ENCODE measurements at regions of chr6 and their contacts with region 1.

Region 1: DNA sequence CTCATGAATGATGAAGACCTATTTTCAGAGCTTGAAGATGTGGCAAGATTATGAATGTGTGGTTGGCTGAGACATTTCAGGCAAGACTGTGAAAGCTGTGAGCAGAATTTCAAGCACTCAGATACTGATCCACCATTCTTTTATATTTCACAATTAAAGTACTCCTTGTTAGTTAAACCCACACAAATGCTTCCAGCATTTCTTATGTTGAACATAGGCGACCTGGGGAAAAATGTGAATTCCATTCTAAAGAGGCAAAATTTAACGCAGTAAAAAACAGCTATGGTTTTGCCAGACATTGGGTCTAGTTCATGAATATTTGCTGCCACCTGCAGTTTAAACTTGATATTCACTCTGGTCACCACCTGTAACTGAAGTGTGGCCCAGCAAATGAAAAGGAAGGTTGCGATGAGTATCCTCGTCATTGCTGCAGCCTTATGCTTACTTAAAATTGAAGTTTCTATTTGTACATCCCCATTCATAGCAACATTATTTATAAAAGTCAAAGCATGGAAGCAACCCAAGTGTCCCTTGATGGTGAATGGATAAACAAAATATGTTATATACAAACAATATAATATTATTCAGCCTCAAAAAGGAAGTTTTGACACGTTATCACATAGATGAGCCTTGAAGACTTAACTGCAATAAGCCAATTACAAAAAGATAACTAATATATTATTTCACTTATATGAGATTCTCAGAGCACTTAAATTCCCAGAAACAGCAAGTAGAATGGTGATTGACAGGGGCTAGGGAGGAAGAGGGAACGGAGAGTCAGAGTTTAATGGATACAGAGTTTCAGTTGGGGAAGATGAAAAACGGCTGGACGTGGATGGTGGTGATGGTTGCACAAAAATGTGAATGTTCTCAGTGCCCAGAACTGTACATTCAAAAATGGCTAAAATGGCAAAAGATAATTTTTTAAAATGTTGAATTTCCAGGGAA is 32.4 kb upstream of the FAM184A start:
- DNase-seq: peak; percentile 17
- ATAC-seq: peak; percentile 78
- H3K4me3 Mint-ChIP-seq: no peak overlapping the region
- H3K27ac Mint-ChIP-seq: no peak overlapping the region
- H3K4me1 Mint-ChIP-seq: peaks cover 22% of the 10 kb centered on the region
- H3K27me3 Mint-ChIP-seq: no peaks in the 10 kb centered on the region
- CTCF ChIP-seq: no peak

Region 2: GRCh38 chr6:118776607-118777549 is 334.0 kb before region 1 on chr6:
- CTCF ChIA-PET with region 1: no interaction called
- POLR2A ChIA-PET with region 1: no interaction called
- DNase-seq: peak; percentile 48
- ATAC-seq: peak; percentile 74
- H3K4me3 Mint-ChIP-seq: no peak overlapping the region
- H3K27ac Mint-ChIP-seq: no peak overlapping the region
- H3K4me1 Mint-ChIP-seq: peaks cover 11% of the 10 kb centered on the region
- H3K27me3 Mint-ChIP-seq: no peaks in the 10 kb centered on the region
- CTCF ChIP-seq: peak; percentile 35; the same call in 1 of the 2 replicates

Region 3: DNA sequence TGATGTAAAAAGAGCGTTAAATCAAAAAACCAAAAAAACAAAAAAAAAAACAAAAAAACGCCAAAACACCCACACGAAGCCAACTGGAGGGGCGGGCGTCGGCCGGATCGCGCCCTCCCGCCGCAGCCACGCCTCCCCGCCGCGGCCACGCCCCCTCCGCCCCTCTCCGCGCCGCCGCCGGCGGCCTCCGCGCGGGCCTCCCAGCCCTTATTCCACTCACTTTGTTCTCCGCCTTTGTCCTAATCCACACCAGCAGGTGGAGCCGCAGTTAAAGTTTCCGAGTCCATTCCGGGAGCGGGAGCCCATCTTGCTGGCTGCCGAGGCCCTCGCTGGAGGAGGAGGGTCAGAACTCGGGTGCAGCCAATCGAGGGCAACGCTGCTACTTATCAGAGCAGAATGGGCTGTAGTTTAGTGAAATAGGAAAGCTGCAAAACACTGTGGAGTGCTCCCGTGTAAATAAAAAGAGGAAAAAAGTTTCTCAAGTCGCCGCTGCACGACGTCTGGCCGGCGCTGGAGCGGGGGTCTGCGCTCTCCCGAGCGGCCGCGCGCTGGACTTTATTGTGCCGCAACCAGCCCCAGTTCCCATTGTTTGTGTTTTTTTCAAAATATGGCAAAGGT is 217.0 kb before region 1 on chr6 and contains the start of gene ASF1A:
- CTCF ChIA-PET with region 1: interaction called, 13 read pairs
- POLR2A ChIA-PET with region 1: no interaction called
- DNase-seq: peak; percentile 94
- ATAC-seq: peak; percentile 84
- H3K4me3 Mint-ChIP-seq: peak within 1 kb of the TSS; percentile 88
- H3K27ac Mint-ChIP-seq: peak within 1 kb of the TSS; percentile 98
- H3K4me1 Mint-ChIP-seq: peaks cover 42% of the 10 kb centered on the region
- H3K27me3 Mint-ChIP-seq: no peaks in the 10 kb centered on the region
- CTCF ChIP-seq: no peak; the same call in 1 of the 2 replicates
- total RNA-seq, gene ASF1A: 30.9 to 36.7 TPM (median 32.0 TPM) in 3 replicates

Region 4: DNA sequence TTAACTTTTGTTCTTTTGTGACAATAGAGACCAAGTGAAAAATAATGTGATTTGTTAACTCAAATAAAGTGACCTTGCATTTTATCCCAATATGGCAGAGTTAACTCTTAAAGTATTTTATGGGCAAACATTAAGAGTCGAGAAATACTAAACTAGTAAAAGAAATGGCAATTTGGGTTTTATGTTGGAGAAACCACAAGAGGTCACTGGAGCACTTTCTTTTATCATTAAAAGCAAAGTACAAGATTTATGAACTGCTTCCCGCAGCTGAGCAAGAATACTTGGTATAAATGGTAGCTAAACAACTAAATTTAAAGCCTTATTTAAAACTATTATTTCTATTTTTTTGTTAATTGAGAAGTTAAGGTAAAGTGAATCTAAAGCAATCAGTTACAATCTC is 142.5 kb before region 1 on chr6:
- CTCF ChIA-PET with region 1: interaction called, 67 read pairs
- POLR2A ChIA-PET with region 1: no interaction called
- DNase-seq: no peak
- ATAC-seq: peak; percentile 32; the same call in 1 of the 2 replicates
- H3K4me3 Mint-ChIP-seq: no peak overlapping the region
- H3K27ac Mint-ChIP-seq: no peak overlapping the region
- H3K4me1 Mint-ChIP-seq: peaks cover 21% of the 10 kb centered on the region
- H3K27me3 Mint-ChIP-seq: no peaks in the 10 kb centered on the region
- CTCF ChIP-seq: no peak

Region 5: DNA sequence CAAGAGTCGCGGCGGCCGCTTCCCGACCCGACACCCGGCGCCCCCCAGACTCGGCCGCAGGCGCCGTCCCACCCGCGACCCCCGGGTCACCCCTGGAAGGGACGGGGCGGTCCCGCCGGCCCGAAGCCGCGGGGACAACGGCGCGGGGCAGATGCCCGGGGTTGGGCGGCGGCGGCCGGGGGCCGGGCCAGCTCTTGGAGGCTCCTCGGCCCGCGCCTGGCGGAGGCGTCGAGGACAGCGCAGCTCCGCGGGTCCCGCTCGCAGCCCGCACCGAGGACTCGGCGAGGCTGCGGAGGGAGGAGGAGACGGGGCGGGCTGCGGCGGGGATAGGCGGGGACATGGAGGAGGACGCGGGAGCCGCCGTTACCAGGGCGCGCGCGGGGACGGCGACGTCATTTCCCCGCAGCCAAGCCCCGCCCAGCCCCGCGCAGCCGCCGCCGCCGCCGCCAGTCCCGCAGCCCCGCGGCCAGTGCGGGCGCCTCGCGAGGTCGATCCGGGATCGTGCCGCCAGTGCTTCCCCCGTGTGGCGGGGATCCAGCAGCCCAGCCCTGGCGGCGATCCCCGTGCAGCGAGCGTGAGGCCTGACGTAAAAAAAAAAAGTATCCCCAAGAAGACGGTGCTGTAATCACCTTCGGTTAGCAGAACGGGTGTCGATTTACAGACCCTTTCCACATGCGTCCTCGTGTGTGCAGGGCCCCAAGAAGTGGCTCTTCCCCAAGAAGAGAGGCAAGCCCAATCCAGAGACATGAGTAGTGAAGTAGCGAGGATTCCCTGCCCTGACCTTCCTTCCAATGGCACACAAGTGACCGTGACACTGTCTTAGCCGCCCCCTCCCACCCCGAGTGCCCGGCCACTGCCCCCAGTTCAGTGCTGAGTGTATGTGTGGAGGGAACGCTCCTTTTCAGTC is 32.2 kb before region 1 on chr6 and contains the start of gene FAM184A:
- CTCF ChIA-PET with region 1: interaction called, 22 read pairs
- POLR2A ChIA-PET with region 1: no interaction called
- DNase-seq: peak; percentile 73
- ATAC-seq: peak; percentile 80
- H3K4me3 Mint-ChIP-seq: peak within 1 kb of the TSS; percentile 91
- H3K27ac Mint-ChIP-seq: peak within 1 kb of the TSS; percentile 77
- H3K4me1 Mint-ChIP-seq: peaks cover 29% of the 10 kb centered on the region
- H3K27me3 Mint-ChIP-seq: peaks cover 48% of the 10 kb centered on the region
- CTCF ChIP-seq: no peak
- total RNA-seq, gene FAM184A: 13.3 to 19.2 TPM (median 16.2 TPM) in 3 replicates

Region 6: DNA sequence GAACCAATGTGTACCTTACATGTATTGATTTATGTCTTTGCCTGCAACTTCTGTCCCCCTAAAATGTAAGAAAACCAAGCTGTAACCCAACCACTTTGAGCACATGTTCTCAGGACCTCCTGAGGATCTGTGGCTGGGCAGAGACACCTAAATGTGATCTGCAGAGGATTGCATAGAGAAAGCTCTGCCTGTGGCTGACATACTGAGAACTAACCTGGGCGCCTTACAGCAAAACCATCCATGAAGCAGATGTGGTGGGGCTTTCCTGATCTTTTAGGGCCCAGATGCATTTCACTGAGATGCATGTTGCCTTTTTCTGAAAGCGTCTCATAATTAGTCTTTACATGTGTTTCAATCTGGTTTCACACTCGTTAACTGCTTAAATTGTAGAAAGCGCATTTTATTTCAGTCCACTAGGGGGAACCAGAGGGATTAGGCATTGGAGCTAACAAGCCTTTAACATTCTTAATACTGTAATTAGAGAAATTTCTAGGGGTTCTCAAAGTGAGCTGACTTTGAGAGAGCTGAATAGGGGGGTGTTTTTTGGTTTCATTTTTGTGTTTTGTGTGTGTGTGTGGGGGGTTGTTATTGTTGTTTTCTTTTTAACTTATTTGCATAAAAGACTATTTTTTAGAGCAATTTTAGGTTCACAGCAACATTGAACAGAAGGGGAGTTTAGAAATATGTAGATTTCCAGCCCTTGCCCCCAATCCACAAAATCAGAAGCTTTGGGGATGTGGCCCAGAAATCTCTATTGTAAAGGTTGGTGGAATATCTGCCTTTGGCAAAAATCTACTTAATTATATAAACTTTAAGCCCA is 18.5 kb after region 1 on chr6:
- CTCF ChIA-PET with region 1: interaction called, 11 read pairs
- POLR2A ChIA-PET with region 1: no interaction called
- DNase-seq: no peak
- ATAC-seq: peak; percentile 77
- H3K4me3 Mint-ChIP-seq: no peak overlapping the region
- H3K27ac Mint-ChIP-seq: no peak overlapping the region
- H3K4me1 Mint-ChIP-seq: peaks cover 34% of the 10 kb centered on the region
- H3K27me3 Mint-ChIP-seq: no peaks in the 10 kb centered on the region
- CTCF ChIP-seq: peak; percentile 75

Region 7: GRCh38 chr6:119158057-119158848 is 47.4 kb after region 1 on chr6:
- CTCF ChIA-PET with region 1: no interaction called
- POLR2A ChIA-PET with region 1: no interaction called
- DNase-seq: no peak
- ATAC-seq: peak; percentile 44
- H3K4me3 Mint-ChIP-seq: no peak overlapping the region
- H3K27ac Mint-ChIP-seq: no peak overlapping the region
- H3K4me1 Mint-ChIP-seq: no peaks in the 10 kb centered on the region
- H3K27me3 Mint-ChIP-seq: no peaks in the 10 kb centered on the region; the same call in 1 of the 2 replicates
- CTCF ChIP-seq: no peak

Measured in WTC11 (cell line).